Esophagus muscularis mucosa (tissue), 4 donors: ENCODE measurements at regions of chr9 and their contacts with region 1.

Region 1: GRCh38 chr9:35945341-35946018 is 12.5 kb downstream of the OR2S2 start:
- DNase-seq: no peak
- H3K4me3 ChIP-seq: peak overlapping the region in 3 of 4 donors; percentile 3 to 15 (median 12)
- H3K27ac ChIP-seq: peak overlapping the region in 3 of 4 donors; percentile 18 to 39 (median 20)
- H3K4me1 ChIP-seq: peaks cover 6 to 16% (median 12%) of the 10 kb centered on the region in 4 donors
- H3K27me3 ChIP-seq: no peaks in the 10 kb centered on the region
- CTCF ChIP-seq: peak; percentile 82 to 90 (median 86)
- EP300 ChIP-seq: no peak
- POLR2A ChIP-seq: no peak

Region 2: DNA sequence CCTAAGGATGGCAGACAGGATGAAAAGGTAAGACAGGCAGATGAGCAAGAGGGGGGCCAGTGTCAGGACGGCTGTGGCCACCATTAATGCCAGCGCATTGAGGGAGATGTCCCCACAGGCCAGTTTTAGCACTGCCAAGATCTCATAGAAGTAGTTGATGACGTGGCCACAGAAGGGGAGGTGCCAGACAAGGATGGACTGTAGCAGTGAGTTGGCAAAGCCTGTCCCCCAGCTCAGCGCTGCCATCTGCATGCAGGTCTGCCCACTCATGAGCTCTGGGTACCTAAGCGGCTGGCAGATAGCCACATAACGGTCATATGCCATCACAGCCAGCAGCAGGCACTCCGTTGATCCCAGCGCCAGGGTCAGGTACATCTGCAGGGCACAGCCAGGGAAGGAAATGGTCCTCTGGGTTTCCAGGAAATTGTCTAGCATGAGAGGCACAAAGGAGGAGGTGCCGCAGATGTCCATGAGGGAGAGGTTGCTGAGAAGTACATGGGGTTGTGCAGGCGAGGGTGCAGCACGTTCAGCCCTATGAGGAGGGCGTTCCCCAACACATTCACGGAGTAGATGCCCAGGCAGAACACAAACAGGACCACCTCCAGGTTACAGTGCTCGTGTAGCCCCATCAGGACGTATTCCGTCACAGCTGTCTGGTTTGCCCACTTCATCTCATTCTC is 86.0 kb before region 1 on chr9:
- intact Hi-C with region 1: no loop called
- DNase-seq: peak; percentile 91
- H3K4me3 ChIP-seq: no peak overlapping the region
- H3K27ac ChIP-seq: no peak overlapping the region
- H3K4me1 ChIP-seq: peaks cover 3 to 13% (median 10%) of the 10 kb centered on the region in 4 donors
- H3K27me3 ChIP-seq: no peaks in the 10 kb centered on the region
- CTCF ChIP-seq: no peak
- EP300 ChIP-seq: no peak
- POLR2A ChIP-seq: no peak

Region 3: DNA sequence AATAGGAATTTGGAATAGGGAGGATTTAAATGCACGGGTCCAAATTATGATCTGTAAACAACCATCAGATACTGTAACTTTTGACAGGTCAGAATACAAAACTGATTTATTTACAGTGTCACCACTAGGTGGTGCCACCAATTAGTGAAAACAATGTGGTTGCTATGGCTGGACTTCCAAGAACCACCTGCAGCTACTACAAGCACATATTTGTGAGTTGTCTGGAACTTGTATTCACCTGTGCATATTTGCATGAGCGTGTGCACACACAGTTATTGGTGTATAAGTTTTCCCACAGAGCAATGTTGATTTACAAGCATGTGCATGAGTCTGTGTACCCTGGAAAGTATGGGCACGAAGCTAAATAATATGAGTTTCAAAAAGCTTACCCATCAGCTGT is 42.4 kb before region 1 on chr9:
- intact Hi-C with region 1: loop called (anchors 1 kb)
- DNase-seq: no peak
- H3K4me3 ChIP-seq: no peak overlapping the region
- H3K27ac ChIP-seq: no peak overlapping the region
- H3K4me1 ChIP-seq: peaks cover 48 to 55% (median 50%) of the 10 kb centered on the region in 4 donors
- H3K27me3 ChIP-seq: no peaks in the 10 kb centered on the region
- CTCF ChIP-seq: peak; percentile 70 to 86 (median 74)
- EP300 ChIP-seq: no peak
- POLR2A ChIP-seq: no peak

Region 4: DNA sequence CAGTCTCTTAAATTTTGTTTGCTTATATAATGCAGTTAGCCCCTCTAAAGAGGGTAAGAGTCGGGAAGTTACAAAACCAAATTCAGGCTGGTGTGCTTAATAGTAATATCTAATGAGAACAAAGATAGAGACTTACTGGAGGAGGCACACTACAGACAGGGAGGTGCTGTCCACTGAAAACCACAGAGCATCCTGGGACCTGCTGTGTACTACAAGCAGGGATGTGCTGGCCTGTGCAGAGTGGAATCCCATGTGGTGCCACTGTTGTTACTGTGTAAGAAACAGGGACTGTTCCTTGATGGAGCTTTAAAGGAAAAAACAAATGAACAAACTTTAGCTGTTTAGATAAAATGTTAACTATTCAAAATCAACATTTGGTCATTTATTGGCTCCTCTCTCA is 412.2 kb after region 1 on chr9:
- intact Hi-C with region 1: no loop called
- DNase-seq: no peak
- H3K4me3 ChIP-seq: no peak overlapping the region
- H3K27ac ChIP-seq: no peak overlapping the region
- H3K4me1 ChIP-seq: no peaks in the 10 kb centered on the region
- H3K27me3 ChIP-seq: no peaks in the 10 kb centered on the region
- CTCF ChIP-seq: no peak
- EP300 ChIP-seq: no peak
- POLR2A ChIP-seq: no peak